ENCODE measurements at regions of chr4 and their contacts with region 1.

Region 1: GRCh38 chr4:139633661-139634060 is 32.0 kb upstream of the MGST2 start:
- DNase-seq: no peak

Region 2: DNA sequence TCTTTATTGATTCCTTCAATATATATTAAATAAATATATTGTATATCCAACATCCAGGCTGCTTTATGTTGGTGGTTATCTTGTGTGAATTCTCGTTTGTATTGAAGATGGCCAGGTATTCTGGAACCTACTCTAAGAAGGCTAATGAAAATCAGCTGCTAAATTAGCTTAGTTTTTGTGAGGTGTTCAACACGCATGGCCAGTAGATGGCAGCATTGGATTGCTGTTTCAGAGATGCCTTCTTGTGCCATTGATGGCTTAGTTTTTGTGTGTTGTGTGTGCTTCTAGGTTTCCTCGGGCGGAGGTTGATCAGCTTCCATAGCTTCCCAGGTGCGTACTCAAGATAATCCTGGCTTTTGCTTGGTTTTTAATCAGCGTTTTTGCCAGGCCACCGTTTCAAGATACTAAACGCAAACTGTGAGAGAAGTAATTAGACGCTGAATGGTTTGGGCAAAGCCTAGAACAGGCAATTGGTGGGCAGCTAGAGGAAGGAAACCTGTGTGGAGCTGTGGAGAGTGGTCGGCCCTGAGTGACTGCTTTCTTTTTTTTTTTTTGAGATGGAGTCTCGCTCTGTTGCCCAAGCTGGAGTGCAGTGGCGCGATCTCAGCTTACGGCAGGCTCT is 602.9 kb before region 1 on chr4:
- intact Hi-C with region 1: loop called (anchors 10 kb)
- DNase-seq: no peak

Region 3: GRCh38 chr4:139416073-139416673 is 217.5 kb before region 1 on chr4:
- intact Hi-C with region 1: loop called (anchors 5 kb)
- DNase-seq: no peak

Region 4: DNA sequence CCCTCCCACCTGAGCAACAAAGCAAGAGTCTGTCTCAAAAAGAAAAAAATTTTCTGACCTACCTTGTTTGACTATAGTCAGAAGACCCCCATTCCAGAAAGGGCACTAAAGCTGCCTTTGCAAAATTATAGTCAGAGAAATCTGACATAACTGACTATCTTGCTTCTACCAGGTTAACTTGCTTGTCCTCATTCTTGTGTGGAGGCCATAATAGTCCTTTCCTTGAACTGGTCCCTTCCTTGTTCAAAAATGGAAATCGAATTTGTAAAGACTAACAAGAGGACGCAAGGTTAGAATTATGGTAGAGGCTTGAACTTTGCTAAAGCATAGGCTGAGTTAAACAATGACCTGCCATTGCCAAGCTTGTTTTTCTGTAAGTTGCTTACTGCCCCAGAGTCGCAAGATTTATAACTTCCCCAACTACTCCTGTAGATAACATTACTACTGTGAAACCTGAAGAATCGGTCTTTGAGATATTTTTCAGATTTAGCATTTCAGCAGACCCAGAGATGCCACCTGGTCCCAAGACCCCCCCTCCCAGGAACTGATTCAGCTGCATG is 134.6 kb before region 1 on chr4:
- intact Hi-C with region 1: loop called (anchors 5 kb)
- DNase-seq: no peak

Region 5: GRCh38 chr4:139692309-139693012 is 58.8 kb after region 1 on chr4:
- intact Hi-C with region 1: no loop called
- DNase-seq: no peak

Region 6: GRCh38 chr4:139761461-139761860 is 127.8 kb after region 1 on chr4:
- intact Hi-C with region 1: no loop called
- DNase-seq: no peak

Measured in cardiac septum (tissue), 1 donor.